A673 (cell line): ENCODE measurements at regions of chr11 and their contacts with region 1.

Region 1: GRCh38 chr11:39772525-39773137 is 1686.8 kb downstream of the LRRC4C start:
- DNase-seq: no peak
- H3K4me3 ChIP-seq: no peak overlapping the region
- H3K27ac ChIP-seq: no peak overlapping the region
- H3K4me1 ChIP-seq: no peaks in the 10 kb centered on the region
- H3K27me3 ChIP-seq: no peaks in the 10 kb centered on the region
- CTCF ChIP-seq: no peak

Region 2: GRCh38 chr11:39741066-39741465 is 31.6 kb before region 1 on chr11:
- CTCF ChIA-PET with region 1: interaction called, 11 read pairs
- POLR2A ChIA-PET with region 1: no interaction called
- intact Hi-C with region 1: no loop called
- DNase-seq: no peak
- H3K4me3 ChIP-seq: no peak overlapping the region
- H3K27ac ChIP-seq: no peak overlapping the region
- H3K4me1 ChIP-seq: no peaks in the 10 kb centered on the region
- H3K27me3 ChIP-seq: no peaks in the 10 kb centered on the region
- CTCF ChIP-seq: no peak